Activated naive CD4-positive, alpha-beta T cell treated with anti-CD3 and anti-CD28 coated beads, Interleukin-2, amount 10 ng/mL, durations not matched to agents 7 days and 5 days (primary cell): ENCODE measurements at regions of chr14 and their contacts with region 1.

Region 1: GRCh38 chr14:68816262-68816942 is 23.5 kb upstream of the ZFP36L1 start:
- DNase-seq: peak; percentile 92
- H3K4me3 Mint-ChIP-seq: peak overlapping the region; percentile 77
- H3K27ac Mint-ChIP-seq: peak overlapping the region; percentile 99
- H3K4me1 Mint-ChIP-seq: peaks cover 72% of the 10 kb centered on the region
- H3K27me3 Mint-ChIP-seq: no peaks in the 10 kb centered on the region

Region 2: GRCh38 chr14:67934008-67934481 is 882.4 kb before region 1 on chr14:
- CTCF ChIA-PET with region 1: interaction called, 16 read pairs
- DNase-seq: peak; percentile 27
- H3K4me3 Mint-ChIP-seq: no peak overlapping the region
- H3K27ac Mint-ChIP-seq: no peak overlapping the region
- H3K4me1 Mint-ChIP-seq: peaks cover 2% of the 10 kb centered on the region
- H3K27me3 Mint-ChIP-seq: no peaks in the 10 kb centered on the region

Region 3: GRCh38 chr14:67943947-67944346 is 872.5 kb before region 1 on chr14:
- CTCF ChIA-PET with region 1: interaction called, 15 read pairs
- DNase-seq: peak; percentile 60
- H3K4me3 Mint-ChIP-seq: no peak overlapping the region
- H3K27ac Mint-ChIP-seq: no peak overlapping the region
- H3K4me1 Mint-ChIP-seq: no peaks in the 10 kb centered on the region
- H3K27me3 Mint-ChIP-seq: no peaks in the 10 kb centered on the region

Region 4: GRCh38 chr14:68788996-68789820 is 27.2 kb before region 1 on chr14:
- CTCF ChIA-PET with region 1: interaction called, 105 read pairs
- DNase-seq: peak; percentile 93
- H3K4me3 Mint-ChIP-seq: peak overlapping the region; percentile 95
- H3K27ac Mint-ChIP-seq: peak overlapping the region; percentile 100
- H3K4me1 Mint-ChIP-seq: peaks cover 57% of the 10 kb centered on the region
- H3K27me3 Mint-ChIP-seq: peaks cover 5% of the 10 kb centered on the region

Region 5: GRCh38 chr14:68795597-68796417 is 20.6 kb before region 1 on chr14:
- CTCF ChIA-PET with region 1: interaction called, 105 read pairs
- DNase-seq: peak; percentile 89
- H3K4me3 Mint-ChIP-seq: peak overlapping the region; percentile 95
- H3K27ac Mint-ChIP-seq: peak overlapping the region; percentile 100
- H3K4me1 Mint-ChIP-seq: peaks cover 34% of the 10 kb centered on the region
- H3K27me3 Mint-ChIP-seq: peaks cover 8% of the 10 kb centered on the region

Region 6: GRCh38 chr14:68843471-68844209 is 27.2 kb after region 1 on chr14:
- CTCF ChIA-PET with region 1: interaction called, 28 read pairs
- DNase-seq: peak; percentile 83
- H3K4me3 Mint-ChIP-seq: no peak overlapping the region
- H3K27ac Mint-ChIP-seq: no peak overlapping the region
- H3K4me1 Mint-ChIP-seq: peaks cover 18% of the 10 kb centered on the region
- H3K27me3 Mint-ChIP-seq: peaks cover 16% of the 10 kb centered on the region

Region 7: GRCh38 chr14:69005432-69006147 is 189.2 kb after region 1 on chr14:
- CTCF ChIA-PET with region 1: no interaction called
- DNase-seq: no peak
- H3K4me3 Mint-ChIP-seq: no peak overlapping the region
- H3K27ac Mint-ChIP-seq: no peak overlapping the region
- H3K4me1 Mint-ChIP-seq: peaks cover 7% of the 10 kb centered on the region
- H3K27me3 Mint-ChIP-seq: peaks cover 16% of the 10 kb centered on the region